ENCODE measurements at regions of chr9 and their contacts with region 1.

Region 1: DNA sequence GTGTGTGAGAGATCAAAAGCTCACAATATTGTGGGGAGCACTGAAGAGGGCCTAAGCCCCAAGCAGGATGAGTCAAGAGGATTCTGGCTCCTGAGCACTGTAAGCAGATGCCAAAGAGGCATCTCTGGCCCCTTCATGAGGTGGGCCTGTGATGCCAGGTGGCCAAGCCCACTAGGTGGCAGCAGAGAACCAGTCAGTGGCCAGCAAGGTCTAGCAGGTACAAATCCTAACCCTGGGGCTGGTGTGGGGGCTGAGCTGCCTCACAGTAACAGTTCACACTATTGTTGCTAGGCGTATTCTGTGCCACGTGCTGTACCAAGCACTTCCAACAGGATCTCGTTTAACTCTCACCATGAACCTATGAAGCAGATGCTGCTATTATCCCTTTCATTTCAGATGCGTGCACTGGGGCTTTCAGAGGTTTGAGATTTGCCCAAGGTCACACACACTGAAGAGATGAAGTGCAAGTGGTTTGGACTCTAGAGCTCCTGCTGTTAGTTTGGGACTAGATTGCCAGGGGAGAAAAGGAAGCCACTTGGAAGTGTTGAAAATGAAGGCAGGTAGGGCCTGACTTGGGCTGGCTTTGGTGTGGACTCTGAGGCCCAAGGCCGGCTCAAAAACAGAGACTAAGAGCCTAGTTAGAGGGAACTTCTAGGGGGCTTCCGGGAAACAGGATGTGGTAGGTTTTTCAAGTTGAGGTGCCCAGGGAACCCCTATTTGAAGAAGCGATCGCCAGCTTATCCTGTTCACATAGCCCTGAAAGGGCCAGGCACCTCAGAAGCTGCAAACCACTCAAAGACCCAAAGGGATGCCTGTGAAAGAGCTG is 4.4 kb upstream of the MLANA start:
- DNase-seq: peak; percentile 50 to 81 (median 72)
- ATAC-seq: peak; percentile 85 to 89 (median 87)
- H3K4me3 ChIP-seq: no peak overlapping the region
- H3K27ac ChIP-seq: no peak overlapping the region
- H3K4me1 ChIP-seq: no peaks in the 10 kb centered on the region
- H3K27me3 ChIP-seq: no peaks in the 10 kb centered on the region
- CTCF ChIP-seq: peak; percentile 78 to 94 (median 87)
- POLR2A ChIP-seq: no peak

Region 2: DNA sequence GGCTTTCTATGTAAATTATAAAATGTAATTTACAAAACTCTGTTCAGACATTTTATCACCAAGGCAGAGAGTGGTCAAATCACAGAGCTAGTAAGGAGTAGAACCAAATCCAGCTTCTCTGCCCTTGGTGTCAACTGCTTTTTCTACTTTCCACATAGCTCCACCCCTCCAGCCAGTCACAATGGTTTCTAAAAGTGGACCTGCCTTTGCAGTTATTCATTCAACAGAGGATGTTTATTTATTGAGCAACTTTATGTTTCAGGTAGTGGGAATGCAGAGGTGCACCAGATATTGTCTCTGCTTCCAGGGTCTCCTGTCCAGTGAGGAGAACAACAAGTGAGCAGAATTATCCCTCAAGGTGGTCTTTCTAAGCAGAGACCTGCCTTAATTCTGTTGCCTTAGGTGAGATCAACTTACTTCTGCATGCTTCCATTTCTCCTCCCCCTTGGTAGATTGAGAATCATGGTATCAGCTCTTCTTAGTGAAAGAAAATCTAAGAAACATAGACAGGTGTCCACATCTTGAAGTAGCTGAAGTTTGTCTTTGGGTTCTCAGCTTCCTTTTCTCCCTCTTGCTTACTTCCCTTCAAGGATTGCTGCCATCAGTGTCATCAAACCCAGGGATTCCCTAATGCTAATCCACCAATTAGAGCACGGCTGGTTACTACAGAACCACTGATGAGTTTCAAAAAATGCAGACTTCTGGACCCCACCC is 393.2 kb before region 1 on chr9:
- intact Hi-C with region 1: no loop called
- DNase-seq: no peak
- ATAC-seq: no peak
- H3K4me3 ChIP-seq: no peak overlapping the region
- H3K27ac ChIP-seq: peak overlapping the region in 2 of 12 donors; percentile 32 to 91
- H3K4me1 ChIP-seq: peaks cover 0 to 44% (median 0%) of the 10 kb centered on the region in 12 donors
- H3K27me3 ChIP-seq: no peaks in the 10 kb centered on the region
- CTCF ChIP-seq: no peak
- POLR2A ChIP-seq: no peak

Region 3: GRCh38 chr9:5799314-5799713 is 87.0 kb before region 1 on chr9:
- intact Hi-C with region 1: no loop called
- DNase-seq: no peak
- ATAC-seq: peak in 2 of 4 donors; percentile 33 to 39
- H3K4me3 ChIP-seq: peak overlapping the region in 1 of 12 donors; percentile 42
- H3K27ac ChIP-seq: no peak overlapping the region
- H3K4me1 ChIP-seq: peaks cover 0 to 6% (median 0%) of the 10 kb centered on the region in 12 donors
- H3K27me3 ChIP-seq: no peaks in the 10 kb centered on the region
- CTCF ChIP-seq: peak; percentile 10 to 62 (median 48)
- POLR2A ChIP-seq: no peak

Region 4: DNA sequence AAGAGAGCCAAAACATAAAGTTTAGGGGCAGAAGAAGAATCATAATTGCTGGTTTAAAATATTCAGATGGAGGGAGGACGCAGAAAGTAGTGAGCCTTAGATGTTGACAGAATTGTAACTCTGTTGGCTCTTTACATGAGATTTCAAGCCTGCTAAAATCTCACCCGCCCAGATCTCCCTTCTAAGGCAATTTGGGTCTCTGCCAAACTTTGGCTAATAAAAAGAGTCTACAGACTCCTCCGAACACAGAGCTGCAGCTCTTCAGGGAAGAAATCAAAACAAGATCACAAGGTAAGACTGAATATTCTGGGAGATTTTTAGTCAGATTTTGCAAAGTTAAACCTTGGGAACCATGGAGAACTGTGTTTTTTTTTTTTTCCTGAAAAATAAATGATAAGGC is 329.2 kb after region 1 on chr9 and contains the start of gene IL33:
- intact Hi-C with region 1: no loop called
- DNase-seq: peak in 1 of 5 donors; percentile 47
- ATAC-seq: peak; percentile 59 to 81 (median 78)
- H3K4me3 ChIP-seq: peak within 1 kb of the TSS in 11 of 12 donors; percentile 3 to 63 (median 49)
- H3K27ac ChIP-seq: peak within 1 kb of the TSS in 11 of 12 donors; percentile 41 to 88 (median 74)
- H3K4me1 ChIP-seq: peaks cover 0 to 38% (median 3%) of the 10 kb centered on the region in 12 donors
- H3K27me3 ChIP-seq: no peaks in the 10 kb centered on the region
- CTCF ChIP-seq: no peak
- POLR2A ChIP-seq: peak in 1 of 2 donors; percentile 16
- total RNA-seq, gene IL33: 6.6 to 36.5 (median 12.7) TPM

Region 5: GRCh38 chr9:6305954-6306563 is 419.7 kb after region 1 on chr9:
- intact Hi-C with region 1: loop called in 8 of 10 experiments (anchors 2 to 10 kb)
- DNase-seq: no peak
- ATAC-seq: peak in 3 of 4 donors; percentile 52 to 74 (median 61)
- H3K4me3 ChIP-seq: no peak overlapping the region
- H3K27ac ChIP-seq: no peak overlapping the region
- H3K4me1 ChIP-seq: no peaks in the 10 kb centered on the region
- H3K27me3 ChIP-seq: peaks cover 0 to 4% (median 0%) of the 10 kb centered on the region in 9 donors
- CTCF ChIP-seq: peak; percentile 31 to 80 (median 66)
- POLR2A ChIP-seq: no peak

Measured in heart left ventricle (tissue), 16 donors.